A549 (cell line): ENCODE measurements at regions of chr6 and their contacts with region 1.

Region 1: GRCh38 chr6:24283043-24283985 is 74.5 kb downstream of the DCDC2 start:
- DNase-seq: peak; percentile 83 to 90
- ATAC-seq: peak; percentile 100
- H3K4me3 ChIP-seq: no peak overlapping the region
- H3K27ac ChIP-seq: peak overlapping the region; percentile 71 to 80
- H3K4me1 ChIP-seq: peaks cover 13% of the 10 kb centered on the region
- CTCF ChIP-seq: peak; percentile 98
- EP300 ChIP-seq: no peak
- POLR2A ChIP-seq: no peak
- RAD21 ChIP-seq: peak; percentile 66 to 91

Region 2: DNA sequence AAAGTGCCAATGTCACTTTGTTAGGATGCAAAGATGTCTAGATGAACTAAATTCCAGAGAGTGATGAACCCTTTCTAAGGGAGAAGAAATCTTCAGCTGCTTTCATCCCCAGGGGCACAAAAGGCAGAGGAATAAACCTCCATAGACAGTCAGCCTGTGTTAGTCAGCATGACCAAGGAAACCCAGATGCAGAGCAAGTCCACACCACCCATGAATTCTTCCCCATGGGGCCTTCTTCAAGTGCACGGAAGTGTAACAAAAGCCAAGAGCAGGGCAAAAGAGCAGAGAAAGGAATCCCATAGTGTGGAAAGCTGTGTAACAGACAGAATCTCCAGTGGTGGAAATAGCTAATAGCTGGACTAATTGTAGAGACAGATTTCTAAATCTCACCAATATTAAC is 24.6 kb after region 1 on chr6:
- CTCF ChIA-PET with region 1: interaction called, 11 read pairs
- POLR2A ChIA-PET with region 1: no interaction called
- DNase-seq: no peak
- ATAC-seq: peak; percentile 13 to 68; a peak in 3 of 6 replicates
- H3K4me3 ChIP-seq: no peak overlapping the region
- H3K27ac ChIP-seq: peak overlapping the region; percentile 52 to 84
- H3K4me1 ChIP-seq: peaks cover 52% of the 10 kb centered on the region
- CTCF ChIP-seq: no peak
- EP300 ChIP-seq: no peak
- POLR2A ChIP-seq: no peak
- RAD21 ChIP-seq: no peak

Region 3: DNA sequence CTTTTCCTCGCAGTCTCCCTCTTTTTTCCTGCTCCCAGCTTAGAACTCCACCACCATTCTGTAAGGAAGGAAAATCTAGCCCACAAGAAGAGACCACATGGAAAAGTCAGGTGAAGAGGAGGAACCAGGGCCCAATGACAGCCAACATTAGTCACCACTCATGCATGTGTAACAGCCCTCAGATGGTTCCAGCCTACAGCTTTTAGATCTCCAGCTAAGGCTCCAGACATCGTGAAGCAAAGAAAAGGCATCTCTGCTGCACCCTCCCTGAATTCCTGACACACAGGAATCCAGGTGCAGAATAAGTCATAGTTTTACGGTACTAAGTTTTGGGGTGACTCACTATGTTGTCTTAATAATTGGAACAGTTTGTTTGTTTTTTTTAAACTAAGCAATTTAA is 49.0 kb after region 1 on chr6:
- CTCF ChIA-PET with region 1: interaction called, 16 read pairs
- POLR2A ChIA-PET with region 1: no interaction called
- DNase-seq: peak in 1 of 2 experiments; percentile 62
- ATAC-seq: peak; percentile 85 to 90
- H3K4me3 ChIP-seq: no peak overlapping the region
- H3K27ac ChIP-seq: peak overlapping the region; percentile 53 to 60
- H3K4me1 ChIP-seq: peaks cover 52% of the 10 kb centered on the region
- CTCF ChIP-seq: no peak
- EP300 ChIP-seq: no peak
- POLR2A ChIP-seq: no peak
- RAD21 ChIP-seq: no peak

Region 4: DNA sequence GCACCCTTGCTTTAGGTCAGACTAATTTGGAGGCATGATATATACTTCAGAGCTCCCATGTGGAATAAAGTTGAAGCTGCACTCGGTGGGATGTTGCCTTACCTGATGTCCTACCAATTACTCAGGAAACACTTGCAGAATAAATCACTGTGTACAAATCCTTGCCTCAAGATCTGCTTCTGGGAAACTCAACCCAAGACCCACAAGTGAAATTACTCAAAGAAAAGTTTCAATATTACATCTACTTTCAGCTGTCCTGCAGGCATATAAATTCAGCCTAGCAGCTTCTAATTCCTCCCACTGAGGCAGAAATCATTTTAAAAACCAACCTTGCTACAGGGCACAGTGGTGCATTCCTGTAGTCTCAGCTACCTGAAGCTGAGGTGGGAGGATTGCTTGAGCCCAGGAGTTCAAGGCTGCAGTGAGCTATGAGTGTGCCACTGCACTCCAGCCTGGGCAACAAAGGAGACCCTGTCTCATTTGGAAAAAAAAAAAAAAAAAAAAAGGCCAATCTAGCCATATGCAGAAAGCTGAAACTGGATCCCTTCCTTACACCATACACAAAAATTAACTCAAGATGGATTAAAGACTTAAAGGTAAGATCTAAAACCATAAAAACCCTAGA is 95.3 kb after region 1 on chr6:
- CTCF ChIA-PET with region 1: interaction called, 20 read pairs
- POLR2A ChIA-PET with region 1: no interaction called
- DNase-seq: no peak
- ATAC-seq: no peak
- H3K4me3 ChIP-seq: no peak overlapping the region
- H3K27ac ChIP-seq: no peak overlapping the region
- H3K4me1 ChIP-seq: peaks cover 15% of the 10 kb centered on the region; the same call in 2 of the 3 replicates
- CTCF ChIP-seq: no peak
- EP300 ChIP-seq: no peak
- POLR2A ChIP-seq: no peak
- RAD21 ChIP-seq: no peak

Region 5: GRCh38 chr6:24394780-24395437 is 111.6 kb after region 1 on chr6:
- CTCF ChIA-PET with region 1: interaction called, 79 read pairs
- POLR2A ChIA-PET with region 1: interaction called, 8 read pairs
- DNase-seq: no peak
- ATAC-seq: peak in 1 of 2 experiments; percentile 54; a peak in 2 of 6 replicates
- H3K4me3 ChIP-seq: no peak overlapping the region
- H3K27ac ChIP-seq: peak overlapping the region in 1 of 2 experiments; percentile 35; a peak in 1 of 6 replicates
- H3K4me1 ChIP-seq: 0 out of 3 replicates have a peak, but pooled peaks cover 4% of the 10 kb centered on the region
- CTCF ChIP-seq: no peak
- EP300 ChIP-seq: no peak
- POLR2A ChIP-seq: no peak
- RAD21 ChIP-seq: no peak